K562 (cell line): ENCODE measurements at regions of chr14 and their contacts with region 1.

Region 1: DNA sequence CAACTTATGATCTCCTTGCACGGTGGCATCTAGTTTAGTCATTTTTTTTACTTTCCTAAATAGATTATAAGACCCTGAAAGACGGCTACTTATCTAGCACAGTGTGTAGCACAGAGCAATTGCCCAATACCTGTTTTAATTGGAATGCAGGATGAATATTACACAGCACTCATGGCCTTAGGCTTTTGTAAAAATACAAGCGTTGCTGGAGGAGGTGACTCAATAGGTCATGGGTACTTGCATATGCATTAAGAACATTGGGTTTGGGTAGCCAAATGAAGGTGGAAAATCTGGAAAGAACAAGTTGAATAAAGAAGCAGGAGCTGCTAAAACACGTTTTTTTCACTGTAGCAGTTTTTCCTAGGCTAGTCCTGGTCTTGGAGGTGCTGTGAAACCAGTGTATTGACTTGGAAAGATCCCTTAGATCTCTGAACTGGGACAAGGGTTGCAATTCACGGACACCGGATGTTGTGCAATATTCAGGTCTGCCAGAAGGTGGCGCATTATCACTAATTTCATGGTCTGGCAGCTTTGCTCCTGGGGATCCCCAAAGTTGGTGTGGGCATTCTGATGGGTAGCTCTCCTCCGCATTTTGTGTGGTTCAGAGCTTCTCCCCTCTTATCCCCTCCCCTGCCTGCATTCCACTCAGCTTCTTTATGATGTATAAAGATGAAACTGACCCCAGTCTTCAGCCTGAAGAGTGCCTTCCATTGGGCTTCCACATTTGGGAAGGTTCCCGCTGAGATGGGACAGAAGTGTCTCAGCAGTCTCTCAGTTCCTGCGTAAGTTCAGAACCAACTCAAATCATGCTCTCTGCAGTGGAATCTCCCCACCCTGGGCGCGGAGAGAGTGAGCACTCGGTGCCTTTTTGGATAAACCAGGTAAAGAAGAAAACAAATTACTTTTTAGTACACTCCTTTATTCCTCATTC is 278.3 kb downstream of the NRXN3 start:
- DNase-seq: peak; percentile 53 to 69 (median 63)
- ATAC-seq: peak; percentile 60
- H3K4me3 ChIP-seq: no peak overlapping the region
- H3K27ac ChIP-seq: no peak overlapping the region
- H3K4me1 ChIP-seq: no peaks in the 10 kb centered on the region
- H3K27me3 ChIP-seq: no peaks in the 10 kb centered on the region
- CTCF ChIP-seq: peak; percentile 55 to 69 (median 69)
- EP300 ChIP-seq: no peak
- POLR2A ChIP-seq: no peak
- RAD21 ChIP-seq: peak; percentile 40 to 55

Region 2: DNA sequence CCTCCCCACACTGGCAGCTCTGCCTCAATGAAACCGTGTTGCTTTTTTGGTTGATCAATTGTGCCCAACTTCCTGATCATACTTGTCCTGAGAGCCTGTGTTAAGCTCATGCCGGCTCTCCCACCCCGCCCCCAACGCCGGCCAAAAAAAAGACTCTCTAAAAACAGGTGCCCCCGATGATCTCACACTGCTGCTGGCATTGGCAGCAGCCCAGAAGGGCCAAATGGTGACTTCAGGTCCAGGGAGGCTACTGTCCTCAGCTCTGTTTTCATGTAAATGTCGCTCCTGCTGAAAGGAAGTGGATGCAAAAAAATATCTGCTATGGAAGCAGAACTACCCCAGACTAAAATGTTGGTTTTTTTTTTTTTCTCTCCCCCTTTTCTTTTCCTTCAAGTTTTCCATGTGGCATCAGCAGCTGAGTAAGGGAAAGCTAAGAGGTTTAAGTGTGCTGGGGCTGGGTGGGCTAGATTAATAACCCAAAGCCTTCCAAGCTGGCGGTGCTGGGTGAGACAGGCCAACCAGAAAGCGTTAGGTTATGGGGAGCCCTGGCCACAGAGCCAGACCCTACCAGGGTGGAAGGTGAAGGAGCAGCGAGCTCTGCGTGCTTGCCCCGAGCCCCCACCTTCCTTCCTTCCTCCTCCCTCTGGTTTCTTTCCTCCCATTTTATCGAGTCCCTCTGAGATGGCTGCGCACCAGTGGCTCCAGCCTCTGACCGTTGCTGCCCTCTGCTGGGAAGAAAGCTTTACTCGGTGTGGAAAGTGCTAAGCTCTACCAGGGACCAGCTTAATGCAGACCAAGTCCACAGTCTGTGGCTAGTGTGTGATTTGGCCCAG is 117.8 kb after region 1 on chr14:
- CTCF ChIA-PET with region 1: no interaction called
- POLR2A ChIA-PET with region 1: interaction called, 4 read pairs
- in situ Hi-C with region 1: no loop called
- intact Hi-C with region 1: loop called (anchors 1 kb)
- DNase-seq: peak; percentile 39 to 66 (median 46)
- ATAC-seq: peak; percentile 99
- H3K4me3 ChIP-seq: no peak overlapping the region
- H3K27ac ChIP-seq: no peak overlapping the region
- H3K4me1 ChIP-seq: no peaks in the 10 kb centered on the region
- H3K27me3 ChIP-seq: no peaks in the 10 kb centered on the region
- CTCF ChIP-seq: peak; percentile 71 to 75 (median 72)
- EP300 ChIP-seq: no peak
- POLR2A ChIP-seq: no peak
- RAD21 ChIP-seq: peak; percentile 63 to 76

Region 3: GRCh38 chr14:78598041-78598920 is 149.9 kb after region 1 on chr14:
- CTCF ChIA-PET with region 1: no interaction called
- POLR2A ChIA-PET with region 1: no interaction called
- in situ Hi-C with region 1: no loop called
- intact Hi-C with region 1: loop called (anchors 10 kb)
- DNase-seq: peak; percentile 55 to 73 (median 65)
- ATAC-seq: peak; percentile 99
- H3K4me3 ChIP-seq: no peak overlapping the region
- H3K27ac ChIP-seq: no peak overlapping the region
- H3K4me1 ChIP-seq: no peaks in the 10 kb centered on the region
- H3K27me3 ChIP-seq: no peaks in the 10 kb centered on the region
- CTCF ChIP-seq: peak; percentile 80 to 83 (median 81)
- EP300 ChIP-seq: no peak
- POLR2A ChIP-seq: no peak
- RAD21 ChIP-seq: peak; percentile 57 to 68

Region 4: DNA sequence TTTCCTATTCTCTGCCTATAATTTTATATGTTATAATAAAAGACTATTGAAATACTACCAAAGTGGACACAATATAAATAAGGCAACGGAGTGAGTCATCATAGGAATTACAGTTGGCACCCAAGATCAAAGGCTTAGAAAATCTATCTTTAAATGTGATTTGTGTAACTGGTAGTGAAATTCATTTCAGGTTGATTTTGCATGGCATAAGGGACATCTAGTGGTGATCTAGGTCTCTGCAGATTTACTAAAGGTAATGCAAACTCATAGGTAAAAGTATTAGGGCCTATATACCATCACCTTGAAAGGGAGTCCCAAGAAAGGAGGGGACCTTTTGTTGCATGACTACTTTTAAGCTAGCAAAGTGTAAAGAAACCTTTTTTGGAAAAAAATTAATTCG is 248.9 kb after region 1 on chr14:
- CTCF ChIA-PET with region 1: no interaction called
- POLR2A ChIA-PET with region 1: no interaction called
- in situ Hi-C with region 1: no loop called
- intact Hi-C with region 1: loop called (anchors 2 kb)
- DNase-seq: peak in 2 of 4 experiments; percentile 5 to 8
- ATAC-seq: peak; percentile 54; the same call in 1 of the 3 replicates
- H3K4me3 ChIP-seq: no peak overlapping the region
- H3K27ac ChIP-seq: no peak overlapping the region
- H3K4me1 ChIP-seq: no peaks in the 10 kb centered on the region
- H3K27me3 ChIP-seq: no peaks in the 10 kb centered on the region
- CTCF ChIP-seq: peak in 2 of 3 experiments; percentile 23 to 53; a peak in 2 of 6 replicates
- EP300 ChIP-seq: no peak
- POLR2A ChIP-seq: no peak
- RAD21 ChIP-seq: peak; percentile 59 to 75

Region 5: DNA sequence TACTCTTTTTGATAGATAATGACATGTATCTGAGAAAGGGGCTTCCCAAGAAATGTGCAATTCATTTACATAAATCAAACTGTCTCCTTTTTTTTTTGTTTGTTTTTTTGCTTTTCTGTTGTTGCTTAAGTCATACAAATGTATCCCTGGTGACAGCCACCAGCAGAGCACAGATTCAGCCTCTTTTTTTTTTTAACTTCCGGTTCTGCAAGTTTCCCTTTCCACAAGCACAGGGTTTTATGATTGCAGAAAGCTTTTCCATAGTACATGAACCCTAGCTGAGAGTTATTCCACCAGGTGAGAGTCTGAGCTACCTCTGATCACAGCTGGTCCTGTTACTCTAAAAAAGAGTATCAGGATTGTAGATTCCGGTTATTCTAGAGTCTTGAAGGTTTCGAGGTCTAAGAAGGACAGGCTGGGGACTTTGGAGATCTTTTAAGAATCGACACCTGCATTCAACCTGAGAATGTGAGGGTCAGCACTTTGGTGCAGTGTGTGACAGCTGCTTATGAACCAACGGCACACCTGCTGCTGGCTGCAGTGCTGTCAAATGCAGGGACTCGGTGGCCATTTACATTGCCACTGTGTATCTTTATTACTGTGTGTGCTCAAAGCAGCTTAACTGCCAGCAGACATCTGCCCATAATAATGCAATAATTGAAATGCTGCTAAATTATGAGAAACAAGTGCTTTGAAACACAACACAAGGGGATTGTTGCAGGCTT is 273.5 kb after region 1 on chr14:
- CTCF ChIA-PET with region 1: no interaction called
- POLR2A ChIA-PET with region 1: no interaction called
- in situ Hi-C with region 1: no loop called
- intact Hi-C with region 1: no loop called
- DNase-seq: no peak
- ATAC-seq: no peak
- H3K4me3 ChIP-seq: no peak overlapping the region
- H3K27ac ChIP-seq: no peak overlapping the region
- H3K4me1 ChIP-seq: no peaks in the 10 kb centered on the region
- H3K27me3 ChIP-seq: no peaks in the 10 kb centered on the region
- CTCF ChIP-seq: no peak
- EP300 ChIP-seq: no peak
- POLR2A ChIP-seq: no peak
- RAD21 ChIP-seq: no peak

Region 6: GRCh38 chr14:78836777-78837176 is 388.3 kb after region 1 on chr14:
- CTCF ChIA-PET with region 1: no interaction called
- POLR2A ChIA-PET with region 1: no interaction called
- in situ Hi-C with region 1: no loop called
- intact Hi-C with region 1: loop called (anchors 5 kb)
- DNase-seq: peak; percentile 36 to 53 (median 39)
- ATAC-seq: peak; percentile 83
- H3K4me3 ChIP-seq: no peak overlapping the region
- H3K27ac ChIP-seq: no peak overlapping the region
- H3K4me1 ChIP-seq: no peaks in the 10 kb centered on the region
- H3K27me3 ChIP-seq: no peaks in the 10 kb centered on the region
- CTCF ChIP-seq: peak; percentile 42 to 52 (median 47); a peak in 4 of 6 replicates
- EP300 ChIP-seq: no peak
- POLR2A ChIP-seq: no peak
- RAD21 ChIP-seq: peak; percentile 50 to 53